WTC11 (cell line): ENCODE measurements at regions of chr3 and their contacts with region 1.

Region 1: GRCh38 chr3:134794950-134795745 is at the start of gene EPHB1:
- DNase-seq: peak; percentile 93
- ATAC-seq: peak; percentile 91
- H3K4me3 Mint-ChIP-seq: peak within 1 kb of the TSS; percentile 96
- H3K27ac Mint-ChIP-seq: peak within 1 kb of the TSS; percentile 96
- H3K4me1 Mint-ChIP-seq: peaks cover 13% of the 10 kb centered on the region
- H3K27me3 Mint-ChIP-seq: peaks cover 70% of the 10 kb centered on the region
- CTCF ChIP-seq: peak; percentile 84
- total RNA-seq, gene EPHB1: 7.0 to 9.9 TPM (median 8.2 TPM) in 3 replicates

Region 2: GRCh38 chr3:134754768-134755559 is 40.2 kb before region 1 on chr3:
- CTCF ChIA-PET with region 1: interaction called, 11 read pairs
- POLR2A ChIA-PET with region 1: no interaction called
- DNase-seq: peak; percentile 85
- ATAC-seq: peak; percentile 97
- H3K4me3 Mint-ChIP-seq: no peak overlapping the region
- H3K27ac Mint-ChIP-seq: no peak overlapping the region
- H3K4me1 Mint-ChIP-seq: no peaks in the 10 kb centered on the region
- H3K27me3 Mint-ChIP-seq: no peaks in the 10 kb centered on the region; the same call in 1 of the 2 replicates
- CTCF ChIP-seq: peak; percentile 75

Region 3: GRCh38 chr3:134937256-134938028 is 142.3 kb after region 1 on chr3:
- CTCF ChIA-PET with region 1: interaction called, 33 read pairs
- POLR2A ChIA-PET with region 1: interaction called, 3 read pairs
- DNase-seq: peak; percentile 59
- ATAC-seq: peak; percentile 82
- H3K4me3 Mint-ChIP-seq: no peak overlapping the region
- H3K27ac Mint-ChIP-seq: no peak overlapping the region
- H3K4me1 Mint-ChIP-seq: peaks cover 46% of the 10 kb centered on the region
- H3K27me3 Mint-ChIP-seq: peaks cover 83% of the 10 kb centered on the region
- CTCF ChIP-seq: no peak

Region 4: DNA sequence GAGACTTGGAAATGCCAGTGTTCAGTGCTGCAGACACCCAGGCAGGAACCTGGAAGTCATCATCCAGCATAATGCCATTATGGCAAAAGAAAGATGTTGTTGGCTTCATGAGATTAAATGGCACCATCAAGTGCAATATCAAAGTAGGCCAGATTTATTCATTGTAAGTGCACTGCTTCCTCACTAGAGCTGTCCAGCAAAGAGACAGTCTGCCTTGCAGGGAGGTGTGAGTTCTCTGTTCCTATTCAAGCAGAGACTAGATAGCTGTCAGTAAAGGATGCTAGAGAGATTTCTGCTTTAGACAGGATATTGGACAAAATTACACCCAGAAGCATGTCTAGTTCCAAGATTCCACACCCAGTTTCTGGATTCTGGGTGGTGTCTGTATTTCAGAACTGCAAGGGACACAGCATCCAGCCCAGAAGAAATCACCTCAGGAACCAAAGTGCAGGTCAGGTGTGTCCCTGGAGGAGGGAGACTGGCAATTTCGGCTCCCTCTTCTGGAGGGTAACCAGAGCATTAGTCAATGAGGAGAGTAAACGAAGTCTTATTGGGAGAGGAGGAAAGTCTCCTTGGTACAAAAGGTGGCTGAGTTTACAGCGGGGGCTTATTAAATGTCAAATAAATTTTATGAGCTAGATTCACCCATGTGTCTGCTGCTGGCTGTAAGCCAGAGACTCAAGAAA is 377.2 kb after region 1 on chr3:
- CTCF ChIA-PET with region 1: interaction called, 14 read pairs
- POLR2A ChIA-PET with region 1: no interaction called
- DNase-seq: no peak
- ATAC-seq: peak; percentile 70; the same call in 1 of the 2 replicates
- H3K4me3 Mint-ChIP-seq: no peak overlapping the region
- H3K27ac Mint-ChIP-seq: no peak overlapping the region
- H3K4me1 Mint-ChIP-seq: peaks cover 49% of the 10 kb centered on the region
- H3K27me3 Mint-ChIP-seq: peaks cover 3% of the 10 kb centered on the region; the same call in 1 of the 2 replicates
- CTCF ChIP-seq: no peak

Region 5: GRCh38 chr3:135240426-135240825 is 445.3 kb after region 1 on chr3:
- CTCF ChIA-PET with region 1: interaction called, 65 read pairs
- POLR2A ChIA-PET with region 1: no interaction called
- DNase-seq: peak; percentile 60
- ATAC-seq: peak; percentile 85
- H3K4me3 Mint-ChIP-seq: no peak overlapping the region
- H3K27ac Mint-ChIP-seq: no peak overlapping the region
- H3K4me1 Mint-ChIP-seq: peaks cover 29% of the 10 kb centered on the region
- H3K27me3 Mint-ChIP-seq: no peaks in the 10 kb centered on the region
- CTCF ChIP-seq: 0 out of 2 replicates have a peak, but pooled peaks have one; percentile 22

Region 6: DNA sequence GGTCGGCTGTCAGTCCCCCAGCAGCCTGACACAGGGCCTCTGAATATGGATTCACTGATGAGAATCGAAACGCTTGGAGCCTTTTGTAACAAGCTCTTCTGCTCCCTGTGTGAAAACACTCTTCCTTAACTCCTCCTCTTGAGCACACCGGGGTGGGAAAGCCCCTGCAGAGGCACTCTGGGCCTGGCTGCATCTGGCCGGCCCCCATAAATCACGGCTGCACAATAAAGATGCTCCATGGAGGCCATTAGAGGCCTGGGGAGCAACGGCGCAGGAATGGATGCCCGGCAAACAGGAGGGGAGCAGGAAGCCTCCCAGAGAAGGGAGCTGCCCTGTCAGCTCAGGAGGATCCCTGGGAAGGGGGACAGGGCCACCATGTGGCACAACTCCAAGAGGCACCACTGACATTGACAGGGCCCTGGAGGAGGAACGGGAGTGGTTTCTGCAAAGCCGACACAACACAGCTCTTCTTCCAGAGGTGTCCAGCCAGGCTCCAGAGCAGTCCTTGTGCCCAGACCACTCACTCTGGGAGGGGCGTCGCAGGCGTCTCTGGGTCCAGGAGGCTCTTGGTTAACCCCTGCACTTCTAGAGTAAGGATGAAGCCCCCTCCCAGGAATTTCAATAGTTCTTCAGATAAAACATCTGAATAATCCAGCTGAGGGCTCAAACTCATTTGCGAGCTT is 661.1 kb after region 1 on chr3:
- CTCF ChIA-PET with region 1: interaction called, 21 read pairs
- POLR2A ChIA-PET with region 1: interaction called, 3 read pairs
- DNase-seq: peak; percentile 67
- ATAC-seq: peak; percentile 93
- H3K4me3 Mint-ChIP-seq: peak overlapping the region; percentile 8; the same call in 1 of the 2 replicates
- H3K27ac Mint-ChIP-seq: no peak overlapping the region
- H3K4me1 Mint-ChIP-seq: peaks cover 22% of the 10 kb centered on the region
- H3K27me3 Mint-ChIP-seq: peaks cover 7% of the 10 kb centered on the region; the same call in 1 of the 2 replicates
- CTCF ChIP-seq: no peak